Dorsolateral prefrontal cortex (tissue), 120 donors: ENCODE measurements at regions of chr17 and their contacts with region 1.

Region 1: DNA sequence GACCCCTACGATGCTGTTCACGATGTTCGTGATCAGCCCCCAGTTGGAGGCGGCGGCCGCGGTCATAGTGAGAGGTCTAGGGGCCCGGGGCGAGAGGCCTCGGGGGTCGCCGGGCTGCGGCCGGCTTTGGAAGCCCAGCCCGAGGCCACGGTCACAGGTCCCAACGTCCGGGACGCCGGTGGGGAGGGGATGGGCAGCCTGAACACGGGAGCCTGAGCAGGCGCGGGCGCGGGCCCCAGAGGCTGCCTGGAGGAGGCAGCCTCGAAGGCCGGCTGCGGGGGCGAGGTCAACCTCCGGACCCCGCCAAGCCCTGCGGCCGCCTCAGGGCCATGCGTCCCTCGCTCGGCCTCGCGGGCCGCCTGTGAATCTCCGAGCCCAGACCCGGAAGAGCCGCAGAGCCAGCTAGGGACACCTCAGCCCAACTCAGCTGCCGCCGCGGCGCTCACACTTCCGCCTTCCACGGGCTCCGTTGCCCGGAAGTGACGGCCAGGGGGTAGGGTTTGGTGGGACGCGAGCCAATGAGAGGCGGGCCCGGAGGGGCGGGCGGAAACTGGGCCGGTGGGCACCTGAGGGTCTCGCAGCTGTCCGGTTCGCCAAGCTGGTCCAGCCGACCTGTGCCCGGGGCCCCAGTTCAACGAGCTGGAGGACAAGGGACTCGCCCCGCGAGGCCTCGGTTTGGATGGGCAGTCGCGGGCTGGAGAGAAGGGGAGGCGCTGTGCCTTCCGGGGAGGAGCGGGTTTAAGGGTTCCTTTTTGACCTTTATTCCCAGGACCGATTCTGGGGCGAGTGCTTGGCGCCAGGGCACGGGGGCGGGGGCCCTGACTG is at the start of gene SLC38A10:
- DNase-seq: peak; percentile 83 to 95 (median 90)
- H3K4me3 ChIP-seq: peak within 1 kb of the TSS; percentile 62 to 98 (median 88)
- H3K27ac ChIP-seq: peak within 1 kb of the TSS; percentile 63 to 98 (median 91)
- H3K27me3 ChIP-seq: no peaks in the 10 kb centered on the region
- CTCF ChIP-seq: peak in 47 of 56 donors; percentile 8 to 68 (median 46)
- total RNA-seq, gene SLC38A10: 30.0 to 80.0 (median 48.8) TPM

Region 2: DNA sequence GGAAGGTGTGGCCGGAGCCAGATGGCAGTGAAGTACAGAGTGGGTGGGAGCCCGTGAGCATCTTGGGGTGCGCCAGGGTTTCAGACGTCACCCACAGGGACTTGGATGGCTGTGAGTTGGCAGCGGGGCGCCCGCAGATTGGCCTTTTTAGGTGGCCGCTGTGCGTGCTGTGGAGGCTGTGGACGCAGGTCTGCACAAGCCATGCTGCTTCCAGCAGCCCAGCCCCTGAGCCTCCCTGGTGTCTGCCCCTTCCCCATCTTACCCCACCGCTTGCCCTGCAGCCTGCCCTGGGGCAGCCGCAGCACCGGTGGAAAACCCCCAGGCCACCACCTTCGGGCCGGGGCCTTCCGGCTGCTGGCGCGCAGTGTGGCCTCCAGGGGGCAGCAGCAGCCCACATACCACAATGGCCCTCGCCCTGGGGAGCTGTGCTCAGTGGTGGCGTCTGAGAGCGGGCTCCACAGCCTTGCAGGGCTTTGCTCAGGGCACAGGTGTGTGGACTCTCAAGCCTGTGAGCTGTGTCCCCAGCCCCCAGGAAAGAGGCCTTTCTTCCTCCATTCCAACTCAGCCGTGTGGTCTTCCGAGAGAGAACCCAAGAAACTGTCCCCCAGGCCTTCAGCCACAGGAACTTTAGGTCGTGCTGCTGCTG is 868.3 kb before region 1 on chr17:
- intact Hi-C with region 1: no loop called
- DNase-seq: peak; percentile 59 to 90 (median 73)
- H3K4me3 ChIP-seq: peak overlapping the region in 2 of 59 donors; percentile 1 to 6
- H3K27ac ChIP-seq: peak overlapping the region in 4 of 59 donors; percentile 18 to 72 (median 34)
- H3K27me3 ChIP-seq: no peaks in the 10 kb centered on the region
- CTCF ChIP-seq: peak; percentile 80 to 100 (median 98)

Region 3: DNA sequence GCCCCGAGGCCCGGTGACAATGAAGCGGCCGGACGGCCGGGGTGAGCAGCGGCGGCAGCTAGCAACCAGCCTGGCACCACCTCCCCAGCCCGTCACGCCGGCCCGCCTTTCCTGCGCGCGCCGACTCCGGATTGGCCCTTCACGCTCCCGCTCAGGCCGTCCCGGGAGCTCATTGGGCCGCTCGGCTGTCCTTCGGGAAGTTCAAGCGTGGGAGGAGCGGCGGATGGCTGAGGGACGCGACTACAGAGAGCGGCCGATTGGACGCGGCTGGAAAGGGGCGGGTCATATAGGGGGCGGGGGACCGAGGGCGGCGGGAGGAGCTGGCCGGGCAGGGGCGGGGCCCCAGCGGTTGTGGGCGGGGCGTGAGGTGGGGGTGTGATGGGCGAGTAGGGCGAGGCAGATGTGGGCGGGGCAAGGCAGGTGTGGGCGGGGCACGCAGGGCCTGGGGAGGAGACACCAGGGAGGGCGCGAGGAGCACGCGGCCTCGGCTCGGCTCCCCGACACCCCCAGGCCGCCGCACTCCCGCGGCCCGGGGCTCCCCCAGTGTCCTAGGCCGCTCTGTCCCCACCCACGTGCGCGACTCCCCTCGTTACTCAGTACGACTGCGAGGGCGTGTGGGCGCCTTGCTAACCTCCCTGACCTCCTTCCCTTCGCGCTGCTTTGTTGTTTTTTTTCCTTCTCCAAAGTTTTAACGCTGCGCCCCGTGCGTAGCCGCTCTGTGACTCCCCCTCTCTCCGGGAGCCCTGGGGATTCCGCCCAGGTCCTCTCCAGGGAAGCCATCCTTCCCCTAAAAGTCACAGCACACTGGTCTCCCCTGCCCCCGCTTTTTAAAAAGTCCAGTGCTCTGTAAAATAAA is 71.9 kb before region 1 on chr17 and contains the start of gene CEP131:
- intact Hi-C with region 1: no loop called
- DNase-seq: peak; percentile 96 to 99 (median 98)
- H3K4me3 ChIP-seq: peak within 1 kb of the TSS; percentile 60 to 93 (median 82)
- H3K27ac ChIP-seq: peak within 1 kb of the TSS in 20 of 59 donors; percentile 3 to 59 (median 30)
- H3K27me3 ChIP-seq: no peaks in the 10 kb centered on the region
- CTCF ChIP-seq: peak in 4 of 56 donors; percentile 10 to 20 (median 15)
- total RNA-seq, gene CEP131: 6.0 to 20.7 (median 9.3) TPM

Region 4: DNA sequence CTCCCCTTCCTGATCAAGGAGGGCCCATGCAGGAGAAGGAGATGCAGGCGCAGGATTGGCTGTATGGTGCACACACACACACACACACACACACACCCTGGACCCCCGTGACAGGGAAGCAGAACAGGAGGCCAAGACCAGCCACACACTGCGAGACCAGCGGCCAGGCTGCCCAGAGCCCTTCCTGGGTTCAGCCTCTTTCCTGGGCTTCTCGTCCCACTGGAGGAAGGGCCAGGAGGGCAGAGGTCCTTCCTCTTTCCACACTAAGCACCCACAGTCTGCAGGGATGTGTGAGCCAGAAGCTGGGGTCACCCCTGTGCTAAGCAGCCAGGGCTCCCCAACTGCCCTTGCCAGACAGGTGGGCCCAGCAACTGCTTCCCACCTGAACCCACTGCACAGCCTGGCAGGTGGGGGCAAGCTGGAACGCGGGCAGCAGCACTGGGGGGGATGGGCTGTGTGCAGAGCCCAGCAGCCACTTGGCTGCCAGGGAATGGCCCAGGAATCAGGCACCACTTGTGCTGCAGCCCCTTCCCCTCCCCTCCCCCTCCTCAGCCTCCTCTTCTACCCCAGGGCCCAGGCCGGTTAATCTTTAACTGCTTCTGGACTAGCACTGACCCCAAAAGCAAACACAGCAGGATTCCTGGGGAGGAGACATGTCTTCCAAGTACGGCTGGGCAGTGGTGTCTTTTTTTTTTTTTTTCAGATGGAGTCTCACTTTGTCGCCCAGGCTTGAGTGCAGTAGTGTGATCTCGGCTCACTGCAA is 44.6 kb after region 1 on chr17:
- intact Hi-C with region 1: loop called in 1 of 2 experiments (anchors 5 kb)
- DNase-seq: no peak
- H3K4me3 ChIP-seq: no peak overlapping the region
- H3K27ac ChIP-seq: peak overlapping the region in 7 of 59 donors; percentile 17 to 97 (median 38)
- H3K27me3 ChIP-seq: peaks cover 0 to 36% (median 6%) of the 10 kb centered on the region in 45 donors
- CTCF ChIP-seq: no peak

Region 5: DNA sequence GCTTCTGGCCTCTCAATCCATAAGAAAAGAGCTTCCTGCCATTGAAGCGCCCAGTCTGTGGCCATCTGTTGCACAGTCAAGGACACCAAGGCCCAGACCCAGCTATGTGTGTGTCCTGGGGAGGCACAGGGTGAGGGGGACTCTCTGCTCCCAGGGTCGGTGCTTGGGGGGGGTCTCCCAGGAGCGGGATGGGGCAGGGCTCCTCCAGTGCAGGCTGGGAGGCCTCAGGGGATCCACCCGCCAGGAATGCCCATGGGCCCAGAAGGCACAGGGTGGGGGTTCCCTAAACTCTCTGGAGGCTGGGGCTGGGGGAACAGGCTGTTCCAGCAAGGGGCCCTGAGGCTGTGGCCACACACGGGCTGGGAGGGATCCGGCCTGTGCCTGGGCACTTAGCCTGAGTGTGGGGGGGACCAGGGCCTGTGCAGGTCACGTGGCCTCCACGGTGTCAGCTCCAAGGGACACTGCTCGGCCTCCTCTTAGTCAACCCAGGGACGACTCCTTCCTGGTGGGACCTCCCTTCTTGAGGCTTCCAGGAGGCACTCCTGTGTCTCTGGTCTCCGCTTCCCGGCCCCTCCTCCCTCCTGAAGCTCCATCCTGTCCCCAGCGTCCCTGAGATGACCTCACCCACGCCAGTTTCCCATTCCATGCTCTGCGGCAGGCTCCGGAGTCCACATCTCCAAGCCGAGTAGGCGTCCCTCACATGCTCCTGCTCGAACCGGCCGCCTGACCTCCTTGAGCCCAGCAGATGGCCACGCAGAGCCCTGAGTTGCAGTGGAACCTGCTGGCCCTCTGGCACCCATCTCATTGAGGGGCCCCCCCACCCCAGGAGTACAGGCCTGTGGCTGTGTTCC is 77.1 kb after region 1 on chr17:
- intact Hi-C with region 1: loop called in 1 of 2 experiments (anchors 10 kb)
- DNase-seq: peak in 9 of 10 donors; percentile 63 to 86 (median 76)
- H3K4me3 ChIP-seq: no peak overlapping the region
- H3K27ac ChIP-seq: peak overlapping the region in 57 of 59 donors; percentile 20 to 91 (median 80)
- H3K27me3 ChIP-seq: peaks cover 0 to 2% (median 0%) of the 10 kb centered on the region in 45 donors
- CTCF ChIP-seq: peak in 14 of 56 donors; percentile 6 to 39 (median 22)

Region 6: DNA sequence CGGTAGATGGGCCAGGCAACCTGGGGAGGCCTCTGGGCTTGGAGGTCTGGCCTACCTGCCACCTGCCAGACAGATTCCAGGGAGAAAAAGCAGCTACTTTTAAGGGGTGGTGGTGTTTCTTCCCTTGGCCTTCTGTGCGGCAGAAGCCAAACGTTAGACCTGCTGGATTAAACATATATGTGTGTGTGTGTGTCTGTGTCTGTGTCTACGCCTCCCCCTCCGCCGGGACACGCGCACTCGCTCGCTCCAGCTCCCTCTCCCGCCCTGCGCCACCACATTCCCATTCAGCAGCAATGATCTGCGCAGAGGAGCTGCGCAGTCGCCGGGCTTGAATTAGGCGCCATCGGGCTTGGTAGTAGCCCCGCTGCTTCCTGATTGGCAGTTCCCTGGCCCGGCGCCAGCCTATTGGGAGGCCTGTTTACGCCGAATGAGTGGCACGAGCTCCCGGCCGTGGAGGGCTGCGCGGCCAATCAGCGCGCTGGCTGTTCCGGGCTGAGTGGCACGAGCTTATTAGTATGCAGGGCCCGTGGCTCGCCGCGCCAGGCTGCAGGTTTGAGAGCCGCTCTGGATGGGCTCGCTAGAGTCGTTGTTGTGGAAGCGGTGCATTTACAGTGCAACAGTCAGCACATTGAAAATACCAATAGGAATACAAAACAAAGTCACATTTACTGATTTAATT is 100.0 kb after region 1 on chr17 and contains the start of gene BAHCC1:
- intact Hi-C with region 1: loop called in 1 of 2 experiments (anchors 10 kb)
- DNase-seq: peak; percentile 100
- H3K4me3 ChIP-seq: peak within 1 kb of the TSS; percentile 65 to 91 (median 81)
- H3K27ac ChIP-seq: peak within 1 kb of the TSS; percentile 79 to 100 (median 99)
- H3K27me3 ChIP-seq: no peaks in the 10 kb centered on the region
- CTCF ChIP-seq: peak in 17 of 56 donors; percentile 9 to 40 (median 19)
- total RNA-seq, gene BAHCC1: 25.1 to 66.1 (median 38.0) TPM

Region 7: DNA sequence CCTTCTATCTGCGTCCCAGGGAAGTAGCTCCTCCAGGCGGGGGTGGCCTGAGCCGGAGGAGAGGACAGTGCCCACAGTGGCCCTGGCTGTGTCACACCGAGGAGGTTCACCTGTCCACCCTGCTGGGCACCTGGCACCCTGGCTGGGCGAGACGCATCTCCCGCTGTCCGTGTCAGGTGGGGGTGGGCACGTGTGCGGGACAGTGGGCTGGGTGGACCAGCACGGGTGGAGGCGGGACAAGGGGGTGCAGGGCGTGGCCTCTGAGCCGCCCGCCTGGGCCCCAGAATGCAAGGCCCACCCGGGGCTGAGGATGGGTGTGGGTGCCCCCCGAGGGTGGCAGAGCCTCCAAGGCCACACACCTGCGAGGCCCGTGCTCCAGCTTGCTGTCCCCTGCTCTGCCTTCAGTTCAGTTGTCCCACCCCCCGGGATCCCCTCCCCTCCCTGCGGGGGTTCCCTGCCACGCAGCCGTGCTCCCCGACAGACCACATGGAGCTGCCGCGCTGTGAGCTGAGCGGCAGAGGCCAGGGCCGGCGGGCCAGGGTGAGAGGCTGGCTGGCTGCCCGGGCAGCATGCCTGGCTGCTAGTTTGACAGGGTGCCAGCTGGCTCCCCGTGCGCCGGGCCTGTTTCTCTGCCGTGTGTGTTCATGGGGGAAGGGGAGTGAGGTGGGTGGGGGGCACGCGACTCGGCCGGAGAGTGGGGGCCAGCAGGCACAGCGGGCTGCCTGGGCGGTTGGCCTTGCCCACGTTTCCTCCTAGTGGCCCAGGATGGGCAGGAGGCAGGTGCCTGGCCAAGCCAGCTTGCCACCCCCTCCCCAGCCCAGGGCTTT is 134.1 kb after region 1 on chr17:
- intact Hi-C with region 1: loop called in 1 of 2 experiments (anchors 5 kb)
- DNase-seq: peak; percentile 76 to 92 (median 84)
- H3K4me3 ChIP-seq: peak overlapping the region in 43 of 59 donors; percentile 1 to 51 (median 30)
- H3K27ac ChIP-seq: peak overlapping the region in 54 of 59 donors; percentile 27 to 97 (median 88)
- H3K27me3 ChIP-seq: no peaks in the 10 kb centered on the region
- CTCF ChIP-seq: peak in 1 of 56 donors; percentile 6